ENCODE measurements at regions of chr2 and their contacts with region 1.

Region 1: DNA sequence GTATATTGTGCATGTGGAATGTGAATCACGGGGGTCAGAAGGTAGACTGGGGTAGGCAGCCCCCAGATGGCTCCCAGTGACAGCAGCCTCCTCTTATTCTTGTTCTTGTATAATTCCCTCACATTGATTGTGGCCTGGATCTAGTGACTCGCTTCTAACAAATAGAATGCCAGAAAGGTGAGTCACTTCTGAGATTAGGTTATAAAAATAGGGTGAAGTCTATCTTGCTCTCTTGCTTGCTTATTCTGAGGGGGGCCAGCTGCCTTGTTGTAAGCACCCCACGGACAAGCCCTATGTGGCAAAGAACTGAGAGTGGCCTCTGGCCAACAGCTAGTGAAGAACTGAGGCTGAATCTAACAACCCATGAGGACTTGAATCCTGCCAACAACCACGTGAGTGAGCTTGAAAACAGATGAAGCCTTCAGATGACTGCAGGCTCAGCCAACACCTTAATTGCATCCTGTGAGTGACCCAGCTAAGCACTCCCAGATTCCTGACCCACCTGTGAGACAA is 15.6 kb upstream of the RMND5A start:
- DNase-seq: peak; percentile 61
- H3K4me3 Mint-ChIP-seq: peak overlapping the region; percentile 66
- H3K27ac Mint-ChIP-seq: peak overlapping the region; percentile 92
- H3K4me1 Mint-ChIP-seq: peaks cover 41% of the 10 kb centered on the region
- H3K27me3 Mint-ChIP-seq: no peaks in the 10 kb centered on the region
- CTCF ChIP-seq: no peak

Region 2: DNA sequence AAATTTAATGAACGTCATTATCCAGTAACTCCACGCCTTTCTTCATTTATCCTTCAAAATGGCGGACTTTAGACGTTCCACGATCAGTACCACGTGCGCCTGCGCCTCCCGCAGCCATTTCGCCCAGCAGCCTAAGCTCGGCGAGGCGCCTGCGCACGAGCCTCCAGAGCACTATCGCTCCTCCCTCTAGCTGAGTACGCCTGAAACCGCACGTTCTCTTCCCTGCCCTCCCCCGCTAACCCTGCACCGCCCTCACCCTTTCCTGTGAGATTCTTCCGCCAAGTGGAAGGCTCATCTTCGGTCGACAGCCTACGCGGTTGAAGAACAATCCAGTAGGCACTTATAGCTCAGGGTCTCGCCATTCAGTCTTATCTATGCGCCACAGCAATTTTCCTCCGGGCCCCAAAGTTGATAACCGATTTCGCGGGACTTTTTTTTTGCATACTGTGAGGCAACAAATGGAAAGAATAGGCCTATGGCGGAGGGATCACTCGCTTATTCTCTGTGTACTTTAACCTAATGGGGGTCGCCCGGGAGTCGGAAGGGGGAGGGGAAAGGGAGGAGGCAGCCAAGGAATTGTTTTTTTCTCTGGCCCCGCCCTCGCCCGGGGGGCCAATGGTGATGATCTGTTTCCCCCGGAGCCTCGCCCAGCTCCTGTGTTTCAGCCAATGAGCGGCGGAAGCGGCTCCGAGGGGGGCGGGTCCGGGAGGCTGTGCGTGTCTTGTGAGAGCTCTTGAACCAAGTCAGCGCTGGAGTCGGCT is 263.7 kb before region 1 on chr2 and contains the start of gene KDM3A:
- CTCF ChIA-PET with region 1: interaction called, 3 read pairs
- intact Hi-C with region 1: loop called (anchors 10 kb)
- DNase-seq: peak; percentile 99
- H3K4me3 Mint-ChIP-seq: peak within 1 kb of the TSS; percentile 79
- H3K27ac Mint-ChIP-seq: peak within 1 kb of the TSS; percentile 96
- H3K4me1 Mint-ChIP-seq: peaks cover 26% of the 10 kb centered on the region
- H3K27me3 Mint-ChIP-seq: no peaks in the 10 kb centered on the region
- CTCF ChIP-seq: no peak
- total RNA-seq, gene KDM3A: 35.5 and 37.8 TPM in 2 replicates

Region 3: DNA sequence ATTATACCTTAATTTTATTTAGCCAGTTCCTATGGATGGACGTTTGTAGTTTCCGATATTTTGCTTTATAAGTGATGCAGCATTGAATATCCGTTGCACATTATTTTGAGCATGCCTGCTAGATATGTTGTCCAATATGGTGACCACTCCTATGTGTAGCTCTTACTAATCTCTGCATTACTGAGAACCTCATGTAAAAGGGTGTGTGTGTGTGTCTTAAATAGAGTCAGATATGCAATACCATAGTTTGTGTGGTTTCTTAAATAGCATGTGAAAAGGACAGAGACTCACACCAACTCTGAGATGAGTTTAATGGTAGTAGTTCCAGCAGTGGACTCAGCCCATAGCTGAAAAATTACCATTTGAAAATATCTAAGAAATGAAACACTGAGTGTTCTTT is 53.9 kb after region 1 on chr2:
- CTCF ChIA-PET with region 1: no interaction called
- intact Hi-C with region 1: loop called (anchors 5 kb)
- DNase-seq: no peak
- H3K4me3 Mint-ChIP-seq: no peak overlapping the region
- H3K27ac Mint-ChIP-seq: no peak overlapping the region
- H3K4me1 Mint-ChIP-seq: no peaks in the 10 kb centered on the region
- H3K27me3 Mint-ChIP-seq: no peaks in the 10 kb centered on the region
- CTCF ChIP-seq: no peak